ENCODE measurements at regions of chr4 and their contacts with region 1.

Region 1: GRCh38 chr4:140153718-140154571 is at the start of gene MAML3:
- DNase-seq: peak; percentile 95 to 98 (median 97)
- ATAC-seq: peak; percentile 63 to 79 (median 74)
- H3K4me3 ChIP-seq: peak within 1 kb of the TSS; percentile 35 to 92 (median 83)
- H3K27ac ChIP-seq: peak within 1 kb of the TSS; percentile 83 to 100 (median 98)
- H3K4me1 ChIP-seq: peaks cover 0 to 21% (median 9%) of the 10 kb centered on the region in 12 donors
- H3K27me3 ChIP-seq: no peaks in the 10 kb centered on the region
- CTCF ChIP-seq: no peak
- POLR2A ChIP-seq: peak in 1 of 2 donors; percentile 86
- total RNA-seq, gene MAML3: 1.7 to 5.9 (median 3.1) TPM

Region 2: GRCh38 chr4:139665690-139666529 is 488.0 kb before region 1 on chr4 and contains the start of gene MGST2:
- intact Hi-C with region 1: loop called in 3 of 10 experiments (anchors 5 to 10 kb)
- DNase-seq: peak; percentile 83 to 90 (median 89)
- ATAC-seq: peak; percentile 92 to 94 (median 93)
- H3K4me3 ChIP-seq: peak within 1 kb of the TSS; percentile 49 to 79 (median 58)
- H3K27ac ChIP-seq: peak within 1 kb of the TSS; percentile 76 to 95 (median 93)
- H3K4me1 ChIP-seq: peaks cover 3 to 61% (median 27%) of the 10 kb centered on the region in 12 donors
- H3K27me3 ChIP-seq: no peaks in the 10 kb centered on the region
- CTCF ChIP-seq: peak in 1 of 12 donors; percentile 7
- POLR2A ChIP-seq: peak in 1 of 2 donors; percentile 44
- total RNA-seq, gene MGST2: 94.7 to 122 (median 105) TPM

Region 3: DNA sequence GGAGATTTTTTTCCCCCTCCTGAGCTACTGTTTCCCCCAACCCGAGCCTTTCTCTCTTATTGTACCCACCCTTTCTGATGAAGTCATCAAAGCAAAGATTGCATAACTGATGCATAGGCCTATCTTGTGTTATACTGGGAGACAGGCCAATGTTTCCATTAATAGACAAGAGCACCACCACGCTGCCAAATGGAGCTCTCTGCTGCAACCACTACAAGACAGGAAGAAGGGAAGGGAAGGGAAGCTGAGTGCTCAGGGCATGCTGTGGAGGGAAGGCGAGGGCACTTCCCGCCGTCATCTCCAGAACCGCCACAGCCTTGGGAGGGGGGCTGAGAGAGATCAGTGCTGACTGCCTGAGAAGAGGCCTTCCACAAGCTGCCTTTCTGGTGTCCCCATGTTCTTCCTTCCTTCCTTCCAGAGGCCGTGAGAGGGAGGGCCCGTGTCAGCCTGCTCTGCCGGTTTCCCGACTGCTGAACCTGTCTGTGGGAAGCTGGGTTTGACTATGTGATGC is 413.4 kb before region 1 on chr4:
- intact Hi-C with region 1: loop called in 8 of 10 experiments (anchors 1 to 5 kb)
- DNase-seq: peak; percentile 77 to 83 (median 82)
- ATAC-seq: peak; percentile 88 to 97 (median 96)
- H3K4me3 ChIP-seq: peak overlapping the region in 8 of 12 donors; percentile 12 to 23 (median 14)
- H3K27ac ChIP-seq: peak overlapping the region; percentile 26 to 91 (median 84)
- H3K4me1 ChIP-seq: peaks cover 0 to 62% (median 33%) of the 10 kb centered on the region in 12 donors
- H3K27me3 ChIP-seq: no peaks in the 10 kb centered on the region
- CTCF ChIP-seq: peak in 6 of 12 donors; percentile 12 to 56 (median 23)
- POLR2A ChIP-seq: peak in 1 of 2 donors; percentile 15

Region 4: DNA sequence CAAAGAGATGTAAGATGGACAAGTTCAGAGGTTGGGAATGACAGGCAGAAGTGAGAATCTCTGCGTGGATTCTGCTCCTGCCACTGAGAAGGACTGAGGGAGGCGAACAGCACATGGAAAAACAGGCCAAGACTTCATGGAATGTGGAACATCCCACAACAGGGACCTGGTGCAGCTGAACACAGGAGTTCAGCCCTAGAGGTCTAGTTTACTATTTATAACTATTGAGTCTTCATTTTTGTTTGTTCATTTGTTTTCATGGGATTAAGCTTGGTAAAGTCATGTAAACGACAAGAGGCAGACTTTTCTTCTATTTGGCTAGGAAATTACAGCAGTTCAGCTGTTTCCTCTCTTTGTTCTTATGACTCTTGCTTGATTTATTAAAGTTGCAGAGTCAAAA is 234.4 kb before region 1 on chr4:
- intact Hi-C with region 1: loop called in 3 of 10 experiments (anchors 5 to 10 kb)
- DNase-seq: peak in 3 of 5 donors; percentile 29 to 43 (median 33)
- ATAC-seq: peak; percentile 62 to 82 (median 69)
- H3K4me3 ChIP-seq: peak overlapping the region in 1 of 12 donors; percentile 1
- H3K27ac ChIP-seq: peak overlapping the region; percentile 19 to 86 (median 80)
- H3K4me1 ChIP-seq: peaks cover 11 to 90% (median 64%) of the 10 kb centered on the region in 12 donors
- H3K27me3 ChIP-seq: no peaks in the 10 kb centered on the region
- CTCF ChIP-seq: no peak
- POLR2A ChIP-seq: no peak

Region 5: DNA sequence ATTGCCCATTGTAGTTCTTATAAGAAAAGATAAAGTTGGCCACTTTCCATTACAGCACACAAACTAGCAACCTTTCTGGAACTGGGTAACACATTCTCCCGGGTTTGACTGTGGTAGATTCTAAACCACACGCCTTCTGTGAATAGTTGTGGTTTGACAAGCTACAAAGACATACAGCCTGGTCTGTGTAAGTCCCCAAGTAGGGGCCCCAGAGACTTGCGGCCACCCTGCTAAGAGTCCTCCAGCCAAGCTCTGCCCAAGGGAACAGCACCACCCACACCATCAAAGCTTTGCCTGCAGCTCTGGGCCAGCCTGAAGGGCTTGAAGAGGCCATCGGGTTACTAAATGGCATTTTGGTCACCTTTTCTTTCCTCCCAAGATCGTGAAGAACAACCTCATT is 203.4 kb before region 1 on chr4:
- intact Hi-C with region 1: no loop called
- DNase-seq: no peak
- ATAC-seq: peak in 1 of 4 donors; percentile 18
- H3K4me3 ChIP-seq: no peak overlapping the region
- H3K27ac ChIP-seq: peak overlapping the region in 1 of 12 donors; percentile 70
- H3K4me1 ChIP-seq: peaks cover 0 to 33% (median 9%) of the 10 kb centered on the region in 12 donors
- H3K27me3 ChIP-seq: no peaks in the 10 kb centered on the region
- CTCF ChIP-seq: no peak
- POLR2A ChIP-seq: no peak

Region 6: DNA sequence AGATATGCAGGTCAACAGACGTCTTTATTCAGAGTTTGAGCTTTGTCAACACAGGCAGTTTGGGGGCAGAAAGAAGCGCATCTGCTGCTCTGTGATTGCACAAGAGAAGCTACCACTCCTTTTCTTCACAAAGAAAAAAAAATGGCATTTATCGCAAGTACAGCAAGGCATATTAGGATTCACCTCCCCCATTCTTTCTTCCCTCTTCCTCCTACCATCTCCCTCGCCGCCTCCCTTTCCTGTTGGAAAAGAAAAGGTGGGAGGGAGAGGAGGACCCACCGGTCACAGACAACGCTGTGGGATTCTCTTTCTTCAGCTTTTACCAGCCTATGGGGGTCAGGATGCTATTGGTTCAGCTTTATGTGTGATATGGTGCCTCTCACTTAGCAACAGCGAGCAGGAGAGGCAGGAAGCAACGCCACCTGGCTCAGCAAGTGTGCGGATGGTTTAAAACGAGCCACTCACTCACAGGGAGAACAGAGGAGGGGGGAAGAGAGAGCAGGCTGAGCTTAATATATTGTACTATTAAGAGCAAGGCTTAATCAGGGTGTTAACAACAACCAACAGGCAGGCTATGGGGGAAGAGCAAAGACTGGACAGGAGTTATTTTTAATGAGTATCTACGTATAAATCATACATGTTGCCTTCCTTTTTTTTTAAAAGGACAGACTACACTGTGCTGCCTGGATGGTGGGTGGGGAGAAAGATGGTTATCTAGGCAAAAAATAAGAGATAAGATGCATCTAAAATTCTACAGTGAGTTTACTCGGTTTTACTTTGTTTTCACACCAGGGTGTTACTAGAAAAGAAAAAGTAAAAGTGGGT is 104.7 kb before region 1 on chr4:
- intact Hi-C with region 1: loop called (anchors 2 to 10 kb)
- DNase-seq: peak in 4 of 5 donors; percentile 54 to 63 (median 58)
- ATAC-seq: peak; percentile 55 to 88 (median 83)
- H3K4me3 ChIP-seq: peak overlapping the region; percentile 2 to 59 (median 42)
- H3K27ac ChIP-seq: peak overlapping the region in 11 of 12 donors; percentile 28 to 79 (median 53)
- H3K4me1 ChIP-seq: peaks cover 0 to 60% (median 28%) of the 10 kb centered on the region in 12 donors
- H3K27me3 ChIP-seq: no peaks in the 10 kb centered on the region
- CTCF ChIP-seq: peak in 5 of 12 donors; percentile 27 to 55 (median 39)
- POLR2A ChIP-seq: no peak

Region 7: DNA sequence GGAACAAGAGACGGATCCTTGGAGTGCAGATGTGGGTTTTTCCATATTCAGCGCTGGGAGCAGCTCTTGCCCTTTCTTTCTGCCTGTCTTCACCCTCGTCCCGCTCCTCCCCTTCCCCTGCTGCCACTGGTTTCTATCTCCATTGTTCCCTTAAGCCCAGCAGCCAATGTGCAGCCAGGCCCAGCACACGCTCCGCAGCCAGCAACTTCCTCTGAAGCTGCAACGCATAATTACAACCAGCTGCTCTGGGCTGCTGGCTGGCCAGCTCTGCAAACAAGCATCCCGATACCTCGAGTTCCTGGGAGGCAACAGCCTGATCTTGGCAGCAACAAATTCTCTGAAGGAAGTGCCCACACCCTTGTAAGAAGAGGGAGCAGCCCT is 83.7 kb after region 1 on chr4:
- intact Hi-C with region 1: loop called in 6 of 10 experiments (anchors 5 kb)
- DNase-seq: peak; percentile 66 to 89 (median 83)
- ATAC-seq: peak; percentile 83 to 86 (median 85)
- H3K4me3 ChIP-seq: peak overlapping the region in 10 of 12 donors; percentile 9 to 37 (median 30)
- H3K27ac ChIP-seq: peak overlapping the region; percentile 6 to 92 (median 86)
- H3K4me1 ChIP-seq: peaks cover 0 to 38% (median 26%) of the 10 kb centered on the region in 12 donors
- H3K27me3 ChIP-seq: no peaks in the 10 kb centered on the region
- CTCF ChIP-seq: no peak
- POLR2A ChIP-seq: no peak